RWPE1 (cell line): ENCODE measurements at regions of chr10 and their contacts with region 1.

Region 1: GRCh38 chr10:57430376-57430775 is 837.3 kb downstream of the IPMK start:
- DNase-seq: no peak
- H3K27ac ChIP-seq: no peak overlapping the region
- CTCF ChIP-seq: no peak

Region 2: DNA sequence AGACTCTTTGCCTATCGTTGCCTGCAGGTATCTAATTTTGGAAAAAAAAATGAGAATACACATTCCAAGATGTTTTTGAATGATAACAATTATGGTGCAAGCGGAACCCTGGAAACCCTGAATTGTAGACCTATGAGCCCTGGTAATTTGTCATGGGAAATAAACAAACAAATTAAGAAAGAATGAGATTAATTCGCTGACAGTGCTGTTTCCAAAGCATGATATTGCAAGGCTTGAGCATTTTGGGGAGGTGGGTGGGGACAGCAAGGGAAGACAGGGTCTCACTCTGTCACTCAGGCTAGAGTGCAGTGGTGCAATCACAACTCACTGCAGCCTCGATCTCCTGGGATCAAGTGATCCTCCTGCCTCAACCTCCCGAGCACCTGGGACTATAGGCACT is 63.0 kb before region 1 on chr10:
- CTCF ChIA-PET with region 1: no interaction called
- POLR2A ChIA-PET with region 1: no interaction called
- DNase-seq: no peak
- H3K27ac ChIP-seq: no peak overlapping the region
- CTCF ChIP-seq: no peak

Region 3: DNA sequence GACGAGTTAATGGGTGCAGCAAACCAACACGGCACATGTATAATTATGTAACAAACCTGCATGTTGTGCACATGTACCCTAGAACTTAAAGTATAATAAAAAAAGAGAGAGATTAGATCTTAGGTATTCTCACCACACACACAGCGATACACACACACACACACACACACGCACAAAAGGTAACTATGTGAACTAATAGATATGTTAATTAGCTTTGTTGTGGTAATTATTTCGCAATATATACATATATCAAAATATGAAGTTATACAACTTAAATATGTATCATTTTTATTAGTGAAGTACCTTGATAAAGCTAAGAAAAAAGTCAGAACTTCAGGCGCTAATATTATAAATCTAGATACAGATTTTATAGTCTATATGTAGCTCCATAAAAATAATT is 11.9 kb before region 1 on chr10:
- CTCF ChIA-PET with region 1: interaction called, 11 read pairs
- POLR2A ChIA-PET with region 1: no interaction called
- DNase-seq: no peak
- H3K27ac ChIP-seq: no peak overlapping the region
- CTCF ChIP-seq: no peak

Region 4: GRCh38 chr10:57482259-57482658 is 51.9 kb after region 1 on chr10:
- CTCF ChIA-PET with region 1: no interaction called
- POLR2A ChIA-PET with region 1: no interaction called
- DNase-seq: no peak
- H3K27ac ChIP-seq: no peak overlapping the region
- CTCF ChIP-seq: no peak